Naive thymus-derived CD4-positive, alpha-beta T cell (primary cell): ENCODE measurements at regions of chr14 and their contacts with region 1.

Region 1: GRCh38 chr14:89416002-89416995 is 734 bp downstream of the FOXN3 start:
- DNase-seq: peak; percentile 97 to 100 (median 98)
- ATAC-seq: peak; percentile 82
- H3K4me3 ChIP-seq: peak overlapping the region; percentile 83
- H3K4me3 Mint-ChIP-seq: peak overlapping the region; percentile 87 to 97 (median 94)
- H3K27ac ChIP-seq: peak overlapping the region; percentile 76
- H3K27ac Mint-ChIP-seq: peak overlapping the region; percentile 81 to 94 (median 90)
- H3K4me1 ChIP-seq: peaks cover 11 to 20% of the 10 kb centered on the region in 2 donors
- H3K4me1 Mint-ChIP-seq: peaks cover 37 to 70% (median 63%) of the 10 kb centered on the region in 7 donors
- H3K27me3 ChIP-seq: no peaks in the 10 kb centered on the region
- H3K27me3 Mint-ChIP-seq: peaks cover 0 to 2% (median 0%) of the 10 kb centered on the region in 5 donors

Region 2: DNA sequence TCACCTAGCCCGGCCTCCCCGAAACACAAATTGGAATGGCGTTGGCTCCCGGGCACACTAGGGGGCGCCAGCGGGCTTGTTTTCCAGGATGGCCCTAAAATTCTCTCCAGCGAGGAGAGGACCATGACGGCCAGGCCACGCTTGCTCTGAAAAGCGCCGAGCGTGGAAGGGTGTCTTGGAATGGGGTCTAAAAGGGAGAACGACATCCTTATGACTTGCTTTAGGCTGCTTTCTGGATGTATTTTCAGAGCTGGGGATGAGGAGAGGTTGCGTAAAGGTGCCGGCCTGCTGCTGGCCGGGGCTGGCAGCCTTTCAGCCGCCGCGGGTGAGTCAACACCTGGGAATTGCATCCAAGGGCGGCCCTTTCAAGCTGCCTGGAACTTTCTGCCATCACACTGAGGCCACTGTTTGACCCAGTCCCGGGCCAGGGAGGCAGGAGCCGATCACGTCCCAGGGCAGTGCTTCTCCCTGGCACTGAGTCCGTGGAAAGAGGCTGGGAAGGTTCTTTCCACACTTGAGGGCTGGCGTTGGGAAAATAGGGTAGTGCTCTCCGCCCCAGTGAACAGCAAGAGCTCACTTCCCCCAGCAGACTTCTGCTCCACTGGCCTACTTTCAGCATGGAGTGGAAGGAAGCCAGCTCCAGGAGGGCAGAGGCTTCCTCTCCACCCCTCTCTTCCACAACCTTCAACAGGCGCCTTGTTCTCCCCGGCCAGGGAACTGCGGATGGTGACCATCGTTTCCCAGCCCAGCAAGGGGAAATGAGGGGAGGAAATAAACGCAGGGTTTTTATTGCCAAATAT is 375.6 kb before region 1 on chr14:
- CTCF ChIA-PET with region 1: no interaction called
- POLR2A ChIA-PET with region 1: no interaction called
- intact Hi-C with region 1: loop called (anchors 1 to 2 kb)
- DNase-seq: peak; percentile 54 to 84 (median 71)
- ATAC-seq: peak; percentile 88
- H3K4me3 ChIP-seq: peak overlapping the region; percentile 48
- H3K4me3 Mint-ChIP-seq: peak overlapping the region; percentile 59 to 89 (median 74)
- H3K27ac ChIP-seq: no peak overlapping the region
- H3K27ac Mint-ChIP-seq: no peak overlapping the region
- H3K4me1 ChIP-seq: peaks cover 6 to 10% of the 10 kb centered on the region in 2 donors
- H3K4me1 Mint-ChIP-seq: peaks cover 0 to 16% (median 13%) of the 10 kb centered on the region in 7 donors
- H3K27me3 ChIP-seq: peaks cover 0 to 3% of the 10 kb centered on the region in 2 donors
- H3K27me3 Mint-ChIP-seq: peaks cover 23 to 36% (median 27%) of the 10 kb centered on the region in 5 donors

Region 3: DNA sequence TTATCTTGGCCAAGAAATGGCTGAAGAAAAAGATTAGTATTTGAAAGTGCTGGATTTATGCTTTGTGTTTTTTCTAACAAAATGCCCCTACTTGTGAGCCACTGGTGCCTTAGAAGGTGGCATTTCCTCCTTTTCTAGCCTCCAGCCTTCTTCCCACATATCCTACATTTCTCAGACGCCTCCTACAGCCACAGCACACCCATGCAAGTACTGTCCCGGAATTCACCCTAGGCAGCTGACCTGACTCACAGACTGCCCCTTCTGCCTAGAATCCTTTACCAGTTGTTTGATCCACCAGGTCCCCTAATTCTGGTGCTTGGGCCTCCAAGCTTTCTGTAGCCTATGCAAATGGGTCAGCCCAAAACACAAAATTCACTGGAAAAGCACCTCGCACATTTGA is 165.2 kb before region 1 on chr14:
- CTCF ChIA-PET with region 1: no interaction called
- POLR2A ChIA-PET with region 1: no interaction called
- intact Hi-C with region 1: no loop called
- DNase-seq: no peak
- ATAC-seq: no peak
- H3K4me3 ChIP-seq: no peak overlapping the region
- H3K4me3 Mint-ChIP-seq: peak overlapping the region in 4 of 10 donors; percentile 11 to 57 (median 31)
- H3K27ac ChIP-seq: no peak overlapping the region
- H3K27ac Mint-ChIP-seq: peak overlapping the region in 6 of 9 donors; percentile 1 to 71 (median 34)
- H3K4me1 ChIP-seq: no peaks in the 10 kb centered on the region
- H3K4me1 Mint-ChIP-seq: peaks cover 10 to 88% (median 76%) of the 10 kb centered on the region in 7 donors
- H3K27me3 ChIP-seq: no peaks in the 10 kb centered on the region
- H3K27me3 Mint-ChIP-seq: no peaks in the 10 kb centered on the region

Region 4: GRCh38 chr14:89303457-89304435 is 112.6 kb before region 1 on chr14:
- CTCF ChIA-PET with region 1: no interaction called
- POLR2A ChIA-PET with region 1: interaction called, 3 read pairs
- intact Hi-C with region 1: loop called (anchors 1 to 5 kb)
- DNase-seq: peak in 8 of 9 donors; percentile 21 to 63 (median 45)
- ATAC-seq: peak; percentile 76
- H3K4me3 ChIP-seq: no peak overlapping the region
- H3K4me3 Mint-ChIP-seq: peak overlapping the region; percentile 63 to 83 (median 73)
- H3K27ac ChIP-seq: peak overlapping the region; percentile 11
- H3K27ac Mint-ChIP-seq: peak overlapping the region; percentile 76 to 95 (median 84)
- H3K4me1 ChIP-seq: peaks cover 0 to 20% of the 10 kb centered on the region in 2 donors
- H3K4me1 Mint-ChIP-seq: peaks cover 38 to 82% (median 78%) of the 10 kb centered on the region in 7 donors
- H3K27me3 ChIP-seq: no peaks in the 10 kb centered on the region
- H3K27me3 Mint-ChIP-seq: no peaks in the 10 kb centered on the region

Region 5: DNA sequence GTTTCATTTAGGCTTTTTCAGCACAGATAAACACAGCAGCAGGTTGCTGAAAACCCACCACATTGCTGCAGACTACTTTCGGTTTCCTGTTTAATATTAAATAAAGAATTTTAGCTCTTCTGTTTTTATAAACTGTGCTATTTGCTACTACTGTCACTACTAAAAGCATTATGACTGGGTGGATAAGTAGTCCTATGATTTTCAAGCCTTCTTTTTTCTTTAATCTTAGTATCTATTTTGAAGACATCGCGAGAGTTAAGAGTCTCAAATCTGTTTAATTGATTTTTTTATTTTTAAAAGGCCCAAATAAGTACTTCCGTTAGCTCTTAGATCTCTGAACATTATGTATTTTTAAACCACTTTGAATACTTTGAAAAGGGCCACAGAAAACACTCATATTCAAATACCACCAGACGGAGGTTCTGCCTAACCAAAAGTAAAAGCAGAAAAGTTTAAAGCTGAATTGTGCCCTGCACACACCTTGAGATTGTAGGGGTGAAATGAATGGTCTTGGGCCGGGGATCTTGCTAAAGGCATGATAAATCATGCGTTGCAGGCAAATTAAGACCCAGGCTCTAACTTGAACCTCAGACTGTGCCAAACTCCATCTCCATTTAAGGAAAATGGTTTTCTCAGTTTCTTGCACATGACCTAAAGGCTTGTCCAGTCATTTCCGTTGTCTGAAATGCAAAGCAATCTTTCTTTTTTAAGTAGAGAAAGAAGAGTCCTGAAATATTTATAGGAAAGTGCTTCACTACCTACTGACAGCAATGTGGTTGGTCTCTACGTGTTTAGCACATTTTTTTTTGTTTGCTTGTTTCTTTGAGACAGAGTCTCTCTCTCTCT is 14.3 kb after region 1 on chr14:
- CTCF ChIA-PET with region 1: interaction called, 3 read pairs
- POLR2A ChIA-PET with region 1: interaction called, 6 read pairs
- intact Hi-C with region 1: loop called (anchors 1 kb)
- DNase-seq: peak in 7 of 9 donors; percentile 59 to 85 (median 78)
- ATAC-seq: peak; percentile 84
- H3K4me3 ChIP-seq: peak overlapping the region; percentile 56
- H3K4me3 Mint-ChIP-seq: peak overlapping the region; percentile 75 to 88 (median 82)
- H3K27ac ChIP-seq: peak overlapping the region; percentile 68
- H3K27ac Mint-ChIP-seq: peak overlapping the region; percentile 72 to 93 (median 83)
- H3K4me1 ChIP-seq: peaks cover 29 to 30% of the 10 kb centered on the region in 2 donors
- H3K4me1 Mint-ChIP-seq: peaks cover 28 to 77% (median 63%) of the 10 kb centered on the region in 7 donors
- H3K27me3 ChIP-seq: no peaks in the 10 kb centered on the region
- H3K27me3 Mint-ChIP-seq: no peaks in the 10 kb centered on the region

Region 6: GRCh38 chr14:89701211-89702043 is 285.1 kb after region 1 on chr14:
- CTCF ChIA-PET with region 1: no interaction called
- POLR2A ChIA-PET with region 1: no interaction called
- intact Hi-C with region 1: loop called (anchors 1 to 2 kb)
- DNase-seq: peak; percentile 67 to 88 (median 80)
- ATAC-seq: peak; percentile 95
- H3K4me3 ChIP-seq: peak overlapping the region; percentile 76
- H3K4me3 Mint-ChIP-seq: peak overlapping the region; percentile 73 to 93 (median 88)
- H3K27ac ChIP-seq: peak overlapping the region; percentile 69
- H3K27ac Mint-ChIP-seq: peak overlapping the region; percentile 75 to 98 (median 89)
- H3K4me1 ChIP-seq: peaks cover 12 to 23% of the 10 kb centered on the region in 2 donors
- H3K4me1 Mint-ChIP-seq: peaks cover 16 to 73% (median 59%) of the 10 kb centered on the region in 7 donors
- H3K27me3 ChIP-seq: no peaks in the 10 kb centered on the region
- H3K27me3 Mint-ChIP-seq: no peaks in the 10 kb centered on the region

Region 7: GRCh38 chr14:89954070-89955028 is 538.0 kb after region 1 on chr14 and contains the start of gene EFCAB11:
- CTCF ChIA-PET with region 1: no interaction called
- POLR2A ChIA-PET with region 1: no interaction called
- intact Hi-C with region 1: loop called (anchors 1 kb)
- DNase-seq: peak; percentile 80 to 98 (median 97)
- ATAC-seq: peak; percentile 90
- H3K4me3 ChIP-seq: peak within 1 kb of the TSS; percentile 72
- H3K4me3 Mint-ChIP-seq: peak within 1 kb of the TSS; percentile 74 to 98 (median 94)
- H3K27ac ChIP-seq: peak within 1 kb of the TSS; percentile 94
- H3K27ac Mint-ChIP-seq: peak within 1 kb of the TSS; percentile 82 to 98 (median 91)
- H3K4me1 ChIP-seq: peaks cover 16 to 21% of the 10 kb centered on the region in 2 donors
- H3K4me1 Mint-ChIP-seq: peaks cover 21 to 54% (median 43%) of the 10 kb centered on the region in 7 donors
- H3K27me3 ChIP-seq: no peaks in the 10 kb centered on the region
- H3K27me3 Mint-ChIP-seq: no peaks in the 10 kb centered on the region
- total RNA-seq, gene EFCAB11: 1.2 to 8.5 (median 1.9) TPM